ENCODE measurements at regions of chr9 and their contacts with region 1.

Region 1: DNA sequence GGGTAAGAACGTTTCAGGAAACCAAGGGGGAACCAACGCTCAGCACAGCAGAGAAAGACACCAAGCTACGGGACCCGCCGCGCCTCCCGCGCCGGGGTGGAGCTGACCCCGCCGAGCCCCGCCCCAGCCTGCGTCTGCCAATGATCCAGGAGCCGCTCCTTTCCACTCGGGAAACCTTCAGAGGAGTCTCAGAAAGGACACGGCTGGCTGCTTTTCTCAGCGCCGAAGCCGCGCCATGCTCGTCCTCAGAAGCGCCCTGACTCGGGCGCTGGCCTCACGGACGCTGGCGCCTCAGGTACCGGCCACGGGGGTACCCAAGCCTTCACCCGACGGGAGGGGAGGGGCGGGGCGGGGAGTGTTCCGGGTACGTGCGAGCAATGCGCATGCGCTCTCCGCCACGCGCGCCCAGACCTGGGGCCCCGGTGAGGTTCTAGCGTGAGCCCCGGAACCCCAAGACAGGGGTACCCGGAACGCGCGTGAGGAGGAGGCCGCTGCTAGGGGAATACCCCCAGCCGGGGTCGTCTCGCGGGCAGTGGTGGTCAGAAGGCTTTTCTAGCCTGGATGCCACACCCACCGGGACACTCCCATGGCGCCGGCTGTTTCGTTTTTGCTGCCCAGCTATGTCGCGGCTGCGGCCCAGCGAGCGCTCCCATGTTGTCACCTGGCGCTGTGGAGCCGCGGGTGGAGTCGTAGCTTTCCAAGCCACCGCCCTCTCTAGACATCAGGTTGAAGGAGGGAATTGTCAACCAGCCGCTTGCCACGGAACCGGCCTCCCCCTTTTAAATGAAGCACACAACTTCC is at the start of gene NIPSNAP3A:
- DNase-seq: peak; percentile 95
- ATAC-seq: peak; percentile 85
- H3K4me3 ChIP-seq: peak within 1 kb of the TSS; percentile 76 to 91 (median 84)
- H3K4me3 Mint-ChIP-seq: peak within 1 kb of the TSS; percentile 95
- H3K27ac ChIP-seq: peak within 1 kb of the TSS; percentile 88 to 90
- H3K27ac Mint-ChIP-seq: peak within 1 kb of the TSS; percentile 96
- H3K4me1 ChIP-seq: peaks cover 11 to 15% of the 10 kb centered on the region in 2 donors
- H3K4me1 Mint-ChIP-seq: peaks cover 30% of the 10 kb centered on the region
- H3K27me3 ChIP-seq: no peaks in the 10 kb centered on the region
- H3K27me3 Mint-ChIP-seq: no peaks in the 10 kb centered on the region
- CTCF ChIP-seq: no peak
- total RNA-seq, gene NIPSNAP3A: 20.8 and 23.6 TPM in 2 replicates

Region 2: GRCh38 chr9:104093647-104094533 is 653.9 kb before region 1 on chr9 and contains the start of gene SMC2:
- CTCF ChIA-PET with region 1: interaction called, 4 read pairs
- POLR2A ChIA-PET with region 1: interaction called, 6 read pairs
- intact Hi-C with region 1: loop called (anchors 1 kb)
- DNase-seq: peak; percentile 97
- ATAC-seq: peak; percentile 98
- H3K4me3 ChIP-seq: peak within 1 kb of the TSS; percentile 62 to 97 (median 80)
- H3K4me3 Mint-ChIP-seq: peak within 1 kb of the TSS; percentile 99
- H3K27ac ChIP-seq: peak within 1 kb of the TSS; percentile 97 to 98
- H3K27ac Mint-ChIP-seq: peak within 1 kb of the TSS; percentile 100
- H3K4me1 ChIP-seq: peaks cover 16 to 17% of the 10 kb centered on the region in 2 donors
- H3K4me1 Mint-ChIP-seq: peaks cover 36% of the 10 kb centered on the region
- H3K27me3 ChIP-seq: no peaks in the 10 kb centered on the region
- H3K27me3 Mint-ChIP-seq: no peaks in the 10 kb centered on the region
- CTCF ChIP-seq: no peak
- total RNA-seq, gene SMC2: 9.3 and 10.6 TPM in 2 replicates

Region 3: GRCh38 chr9:104765138-104765537 is 17.4 kb after region 1 on chr9:
- CTCF ChIA-PET with region 1: interaction called, 10 read pairs
- POLR2A ChIA-PET with region 1: interaction called, 13 read pairs
- intact Hi-C with region 1: loop called (anchors 1 kb)
- DNase-seq: peak; percentile 50
- ATAC-seq: peak; percentile 3
- H3K4me3 ChIP-seq: peak overlapping the region in 3 of 5 experiments; percentile 77 to 91 (median 89)
- H3K4me3 Mint-ChIP-seq: peak overlapping the region; percentile 95
- H3K27ac ChIP-seq: peak overlapping the region; percentile 3 to 89
- H3K27ac Mint-ChIP-seq: peak overlapping the region; percentile 96
- H3K4me1 ChIP-seq: peaks cover 16 to 23% of the 10 kb centered on the region in 2 donors
- H3K4me1 Mint-ChIP-seq: peaks cover 30% of the 10 kb centered on the region
- H3K27me3 ChIP-seq: no peaks in the 10 kb centered on the region
- H3K27me3 Mint-ChIP-seq: no peaks in the 10 kb centered on the region
- CTCF ChIP-seq: no peak

Region 4: GRCh38 chr9:104927912-104928740 is 180.4 kb after region 1 on chr9 and contains the start of gene ABCA1:
- CTCF ChIA-PET with region 1: interaction called, 4 read pairs
- POLR2A ChIA-PET with region 1: no interaction called
- intact Hi-C with region 1: loop called (anchors 1 kb)
- DNase-seq: peak; percentile 92
- ATAC-seq: peak; percentile 62
- H3K4me3 ChIP-seq: peak within 1 kb of the TSS; percentile 73 to 96 (median 94)
- H3K4me3 Mint-ChIP-seq: peak within 1 kb of the TSS; percentile 98
- H3K27ac ChIP-seq: peak within 1 kb of the TSS; percentile 69 to 72
- H3K27ac Mint-ChIP-seq: peak within 1 kb of the TSS; percentile 88
- H3K4me1 ChIP-seq: peaks cover 31 to 41% of the 10 kb centered on the region in 2 donors
- H3K4me1 Mint-ChIP-seq: peaks cover 42% of the 10 kb centered on the region
- H3K27me3 ChIP-seq: no peaks in the 10 kb centered on the region
- H3K27me3 Mint-ChIP-seq: no peaks in the 10 kb centered on the region
- CTCF ChIP-seq: no peak
- total RNA-seq, gene ABCA1: 22.8 and 24.0 TPM in 2 replicates

Region 5: DNA sequence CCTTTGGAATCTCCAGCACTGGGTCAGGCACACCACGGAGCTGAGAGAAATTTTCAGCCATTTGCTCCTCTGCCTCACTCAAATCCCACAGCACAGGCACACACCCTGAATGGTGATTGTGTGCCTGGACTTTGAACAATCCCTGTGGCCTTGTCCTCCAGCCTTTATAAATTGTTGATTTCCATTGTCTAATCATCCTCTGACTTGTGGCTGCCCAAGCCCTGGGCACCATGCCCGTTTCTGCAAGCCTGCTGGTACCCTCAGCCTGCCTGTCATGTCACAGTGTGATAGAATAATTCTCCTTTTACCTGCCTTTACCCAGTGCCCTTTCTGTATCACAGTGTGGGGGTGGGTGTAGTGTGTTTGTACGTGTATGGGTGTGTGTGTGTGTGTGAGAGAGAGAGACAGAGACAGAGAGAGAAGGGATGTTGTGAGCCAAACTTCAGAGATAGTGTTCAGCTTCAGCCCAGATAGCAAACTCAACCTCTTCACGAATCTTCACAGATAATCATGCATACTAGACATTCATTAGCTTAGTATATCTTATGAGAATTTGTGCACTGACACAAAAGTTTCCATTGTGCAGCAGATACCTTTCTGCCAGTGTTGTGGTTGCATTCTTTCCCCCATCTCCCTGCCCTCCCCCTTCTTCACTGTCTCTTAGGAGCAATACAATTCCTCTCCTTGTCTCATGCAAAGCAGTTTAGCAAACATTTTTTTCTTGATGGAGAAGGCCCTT is 468.9 kb after region 1 on chr9:
- CTCF ChIA-PET with region 1: no interaction called
- POLR2A ChIA-PET with region 1: no interaction called
- intact Hi-C with region 1: no loop called
- DNase-seq: no peak
- ATAC-seq: no peak
- H3K4me3 ChIP-seq: no peak overlapping the region
- H3K4me3 Mint-ChIP-seq: no peak overlapping the region
- H3K27ac ChIP-seq: no peak overlapping the region
- H3K27ac Mint-ChIP-seq: no peak overlapping the region
- H3K4me1 ChIP-seq: no peaks in the 10 kb centered on the region
- H3K4me1 Mint-ChIP-seq: no peaks in the 10 kb centered on the region
- H3K27me3 ChIP-seq: no peaks in the 10 kb centered on the region
- H3K27me3 Mint-ChIP-seq: peaks cover 6% of the 10 kb centered on the region
- CTCF ChIP-seq: no peak

Region 6: GRCh38 chr9:105414947-105415661 is 667.3 kb after region 1 on chr9:
- CTCF ChIA-PET with region 1: interaction called, 3 read pairs
- POLR2A ChIA-PET with region 1: no interaction called
- intact Hi-C with region 1: loop called (anchors 1 kb)
- DNase-seq: peak; percentile 77
- ATAC-seq: peak; percentile 81
- H3K4me3 ChIP-seq: no peak overlapping the region
- H3K4me3 Mint-ChIP-seq: no peak overlapping the region
- H3K27ac ChIP-seq: no peak overlapping the region
- H3K27ac Mint-ChIP-seq: no peak overlapping the region
- H3K4me1 ChIP-seq: peaks cover 3 to 4% of the 10 kb centered on the region in 2 donors
- H3K4me1 Mint-ChIP-seq: peaks cover 4% of the 10 kb centered on the region
- H3K27me3 ChIP-seq: no peaks in the 10 kb centered on the region
- H3K27me3 Mint-ChIP-seq: no peaks in the 10 kb centered on the region
- CTCF ChIP-seq: peak; percentile 94

Region 7: DNA sequence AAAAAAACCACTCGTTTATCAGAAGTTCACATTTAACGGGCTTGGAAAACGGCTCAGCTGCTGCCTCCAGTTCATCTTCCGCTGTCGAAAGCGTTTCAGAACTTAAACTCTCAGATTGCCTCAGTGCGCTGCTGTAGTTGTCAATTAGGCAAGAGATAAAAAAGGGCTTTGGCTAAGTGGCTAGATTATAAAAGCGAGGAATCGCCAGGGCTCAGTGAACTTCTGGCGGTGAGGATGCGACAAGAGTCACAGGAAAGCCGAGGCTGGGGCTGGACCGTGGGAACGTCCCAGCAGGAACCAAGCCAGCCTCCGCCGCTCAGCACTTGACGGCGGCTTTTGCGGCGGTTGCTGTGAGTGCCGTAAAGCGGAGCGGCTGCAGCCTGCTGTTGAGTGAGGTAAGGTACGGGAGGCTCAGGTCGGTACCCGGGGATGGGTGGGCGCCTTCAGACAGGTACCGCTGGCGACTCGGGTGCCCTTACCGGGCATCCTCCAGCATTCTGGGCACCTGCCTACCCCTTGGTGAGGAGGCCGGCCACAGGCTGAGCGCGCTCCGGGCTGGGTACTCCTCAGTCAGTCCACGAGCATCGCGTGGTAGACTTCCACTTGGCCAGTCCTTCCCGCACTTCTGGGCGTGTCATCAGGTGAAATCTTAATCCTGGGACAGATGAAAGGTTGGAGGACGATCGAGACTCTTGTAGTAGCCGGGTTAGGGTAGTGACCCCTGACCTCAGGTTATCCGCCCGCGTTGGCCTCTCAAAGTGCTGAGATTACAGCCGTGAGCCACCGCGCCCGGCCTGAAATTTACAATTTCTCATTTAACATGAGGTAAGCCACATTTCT is 810.2 kb after region 1 on chr9 and contains the start of gene FKTN:
- CTCF ChIA-PET with region 1: no interaction called
- POLR2A ChIA-PET with region 1: no interaction called
- intact Hi-C with region 1: loop called (anchors 5 kb)
- DNase-seq: peak; percentile 87
- ATAC-seq: peak; percentile 98
- H3K4me3 ChIP-seq: peak within 1 kb of the TSS; percentile 76 to 99 (median 77)
- H3K4me3 Mint-ChIP-seq: peak within 1 kb of the TSS; percentile 98
- H3K27ac ChIP-seq: peak within 1 kb of the TSS; percentile 38 to 74
- H3K27ac Mint-ChIP-seq: peak within 1 kb of the TSS; percentile 92
- H3K4me1 ChIP-seq: peaks cover 7 to 8% of the 10 kb centered on the region in 2 donors
- H3K4me1 Mint-ChIP-seq: peaks cover 19% of the 10 kb centered on the region
- H3K27me3 ChIP-seq: no peaks in the 10 kb centered on the region
- H3K27me3 Mint-ChIP-seq: no peaks in the 10 kb centered on the region
- CTCF ChIP-seq: no peak
- total RNA-seq, gene FKTN: 16.2 and 18.3 TPM in 2 replicates